CD8-positive, alpha-beta T cell (primary cell): ENCODE measurements at regions of chr5 and their contacts with region 1.

Region 1: DNA sequence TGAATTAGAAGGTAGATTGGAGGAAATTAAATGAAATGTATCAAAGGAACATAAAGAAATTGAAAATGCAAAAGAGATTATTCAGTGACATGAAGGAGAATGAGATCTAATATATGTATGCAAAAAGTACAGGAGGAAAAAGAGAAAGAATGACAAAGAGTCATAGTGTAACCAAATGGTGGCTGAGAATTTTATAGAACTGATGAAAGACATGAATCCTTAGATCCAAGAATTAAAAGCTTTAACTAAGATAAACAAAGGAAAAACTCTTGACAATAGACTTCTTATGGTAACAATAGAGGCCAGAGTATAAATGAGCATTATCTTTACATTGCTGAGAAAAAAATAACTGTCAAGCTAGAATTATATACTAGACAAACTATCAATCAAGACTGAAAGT is 505.4 kb upstream of the CD180 start:
- DNase-seq: no peak
- ATAC-seq: no peak
- H3K4me3 ChIP-seq: no peak overlapping the region
- H3K4me3 Mint-ChIP-seq: no peak overlapping the region
- H3K27ac ChIP-seq: no peak overlapping the region
- H3K27ac Mint-ChIP-seq: no peak overlapping the region
- H3K4me1 ChIP-seq: no peaks in the 10 kb centered on the region
- H3K4me1 Mint-ChIP-seq: no peaks in the 10 kb centered on the region
- H3K27me3 ChIP-seq: no peaks in the 10 kb centered on the region
- H3K27me3 Mint-ChIP-seq: no peaks in the 10 kb centered on the region
- CTCF ChIP-seq: no peak

Region 2: DNA sequence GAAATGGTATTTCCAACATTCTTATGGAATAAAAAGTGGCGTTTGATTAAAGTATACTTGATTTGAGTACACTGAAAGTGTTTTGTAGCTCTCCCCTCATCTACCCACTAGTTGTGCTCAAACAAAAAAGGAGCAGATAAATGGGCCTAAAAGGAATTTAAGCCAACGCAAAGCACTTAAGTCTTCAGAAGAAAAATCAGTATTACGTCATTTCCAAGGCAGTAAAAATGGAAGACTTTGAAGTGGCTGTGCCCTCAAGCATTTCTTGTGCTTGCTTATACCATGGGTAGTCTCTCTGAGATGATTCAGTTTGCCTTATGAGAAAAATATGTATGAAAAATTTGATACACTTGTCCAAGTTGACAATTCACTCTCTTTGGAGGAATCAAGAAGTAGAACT is 225.5 kb before region 1 on chr5:
- CTCF ChIA-PET with region 1: no interaction called
- POLR2A ChIA-PET with region 1: no interaction called
- intact Hi-C with region 1: loop called in 1 of 2 experiments (anchors 5 kb)
- DNase-seq: peak in 2 of 9 experiments; percentile 7 to 25
- ATAC-seq: peak; percentile 55
- H3K4me3 ChIP-seq: no peak overlapping the region
- H3K4me3 Mint-ChIP-seq: no peak overlapping the region
- H3K27ac ChIP-seq: no peak overlapping the region
- H3K27ac Mint-ChIP-seq: no peak overlapping the region
- H3K4me1 ChIP-seq: no peaks in the 10 kb centered on the region
- H3K4me1 Mint-ChIP-seq: peaks cover 7% of the 10 kb centered on the region
- H3K27me3 ChIP-seq: peaks cover 0 to 5% of the 10 kb centered on the region in 2 experiments
- H3K27me3 Mint-ChIP-seq: peaks cover 3% of the 10 kb centered on the region
- CTCF ChIP-seq: no peak